ENCODE measurements at regions of chr13 and their contacts with region 1.

Region 1: GRCh38 chr13:51844862-51845573 is at the start of gene TMEM272:
- ATAC-seq: peak; percentile 32 to 88 (median 75)
- H3K4me3 ChIP-seq: no peak within 1 kb of the TSS
- H3K27ac ChIP-seq: no peak within 1 kb of the TSS
- H3K4me1 ChIP-seq: peaks cover 0 to 2% of the 10 kb centered on the region in 2 donors
- total RNA-seq, gene TMEM272: 0.18 to 0.63 (median 0.29) TPM in 7 of 8 experiments, not detected in the other

Region 2: DNA sequence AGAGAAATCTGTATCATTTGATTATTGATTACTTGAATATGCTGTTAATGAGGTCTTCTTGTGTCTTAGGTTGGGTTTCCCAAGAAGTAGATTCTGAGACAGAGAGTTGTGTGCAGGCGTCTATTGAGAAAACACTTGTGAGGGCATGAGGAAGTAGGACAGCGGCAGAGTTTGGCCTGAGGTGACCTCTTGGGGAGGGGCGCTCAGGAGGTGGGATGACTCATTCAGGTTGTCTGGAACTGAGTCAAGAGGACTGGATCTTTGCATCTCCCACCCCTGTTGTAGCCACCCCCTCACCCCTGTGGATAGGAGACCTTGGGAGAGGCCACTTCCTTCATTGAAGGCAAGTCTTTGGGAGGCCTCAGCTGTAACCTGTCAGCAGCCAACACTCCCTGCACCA is 296.0 kb before region 1 on chr13:
- in situ Hi-C with region 1: no loop called
- ATAC-seq: no peak
- H3K4me3 ChIP-seq: no peak overlapping the region
- H3K27ac ChIP-seq: no peak overlapping the region
- H3K4me1 ChIP-seq: no peaks in the 10 kb centered on the region

Region 3: GRCh38 chr13:52053460-52053859 is 208.4 kb after region 1 on chr13:
- in situ Hi-C with region 1: no loop called
- ATAC-seq: peak in 1 of 8 experiments; percentile 56
- H3K4me3 ChIP-seq: no peak overlapping the region
- H3K27ac ChIP-seq: no peak overlapping the region
- H3K4me1 ChIP-seq: no peaks in the 10 kb centered on the region

Region 4: DNA sequence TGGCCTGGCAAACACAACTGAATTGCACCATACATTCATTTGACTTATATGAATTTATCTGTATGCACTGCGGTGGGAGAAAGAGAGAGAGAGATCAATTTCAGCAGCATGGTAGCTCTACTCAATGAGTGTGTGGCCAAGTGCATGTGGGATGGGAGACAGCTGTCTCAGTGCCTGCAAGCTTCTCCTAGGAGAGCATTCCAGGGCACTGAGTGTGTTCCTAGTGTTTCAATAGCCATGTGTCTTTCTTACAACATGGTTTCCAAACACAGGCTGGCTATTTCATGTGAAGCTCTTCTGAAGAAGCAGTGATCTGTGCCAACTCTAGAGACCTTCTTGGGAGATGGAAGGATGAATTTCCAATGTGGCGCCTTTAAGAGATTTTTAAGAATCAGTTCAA is 240.4 kb after region 1 on chr13:
- in situ Hi-C with region 1: no loop called
- ATAC-seq: peak in 2 of 8 experiments; percentile 54 to 78
- H3K4me3 ChIP-seq: no peak overlapping the region
- H3K27ac ChIP-seq: no peak overlapping the region
- H3K4me1 ChIP-seq: no peaks in the 10 kb centered on the region

Region 5: DNA sequence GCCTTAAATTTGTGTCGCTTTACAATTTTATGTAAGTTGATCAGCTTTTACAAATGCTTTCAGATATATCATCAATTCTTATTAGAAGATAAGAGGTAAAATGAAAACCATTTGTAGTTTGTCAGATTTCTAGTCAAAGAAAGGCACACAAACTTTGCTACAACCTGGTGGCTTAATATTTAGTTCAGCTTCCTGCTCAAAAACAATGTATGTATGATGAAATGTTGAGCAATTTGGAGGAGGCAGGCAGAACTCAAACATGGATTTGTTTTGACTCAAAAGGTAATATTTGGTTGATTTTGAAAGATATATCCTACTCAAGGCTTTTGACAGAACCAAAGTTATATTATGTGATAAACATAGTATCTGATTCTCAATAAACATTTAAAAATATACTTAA is 259.6 kb after region 1 on chr13:
- in situ Hi-C with region 1: loop called in 1 of 9 experiments (anchors 25 kb)
- ATAC-seq: no peak
- H3K4me3 ChIP-seq: no peak overlapping the region
- H3K27ac ChIP-seq: no peak overlapping the region
- H3K4me1 ChIP-seq: peaks cover 0 to 4% of the 10 kb centered on the region in 2 donors